ENCODE measurements at regions of chr3 and their contacts with region 1.

Region 1: GRCh38 chr3:141487521-141488252 is 860 bp downstream of the RASA2 start:
- DNase-seq: peak; percentile 94
- H3K4me3 Mint-ChIP-seq: peak overlapping the region; percentile 90
- H3K27ac Mint-ChIP-seq: peak overlapping the region; percentile 98
- H3K4me1 Mint-ChIP-seq: peaks cover 77% of the 10 kb centered on the region
- H3K27me3 Mint-ChIP-seq: no peaks in the 10 kb centered on the region

Region 2: GRCh38 chr3:141255846-141256261 is 231.8 kb before region 1 on chr3:
- CTCF ChIA-PET with region 1: no interaction called
- DNase-seq: peak; percentile 63
- H3K4me3 Mint-ChIP-seq: no peak overlapping the region
- H3K27ac Mint-ChIP-seq: no peak overlapping the region
- H3K4me1 Mint-ChIP-seq: peaks cover 19% of the 10 kb centered on the region
- H3K27me3 Mint-ChIP-seq: no peaks in the 10 kb centered on the region

Region 3: DNA sequence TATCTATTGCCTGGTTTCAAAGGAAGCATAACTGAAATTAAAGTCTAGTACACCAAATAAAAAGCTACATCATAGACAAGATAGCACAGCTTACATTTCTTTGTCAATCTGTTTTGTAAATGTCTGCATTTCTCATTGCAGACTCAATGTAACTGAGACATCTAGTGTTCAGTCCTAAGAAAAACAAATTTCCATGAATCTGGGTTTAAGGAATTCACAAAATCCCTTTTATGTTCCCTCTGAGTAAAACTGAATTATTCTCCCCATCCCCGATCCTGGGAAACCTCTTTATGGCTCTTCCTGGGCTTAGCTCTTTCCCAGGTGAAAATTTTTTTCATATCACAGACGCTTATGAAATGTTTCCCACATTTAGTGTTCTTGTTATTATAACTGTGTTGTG is 22.5 kb before region 1 on chr3:
- CTCF ChIA-PET with region 1: no interaction called
- DNase-seq: no peak
- H3K4me3 Mint-ChIP-seq: no peak overlapping the region
- H3K27ac Mint-ChIP-seq: no peak overlapping the region
- H3K4me1 Mint-ChIP-seq: peaks cover 4% of the 10 kb centered on the region
- H3K27me3 Mint-ChIP-seq: peaks cover 4% of the 10 kb centered on the region

Region 4: GRCh38 chr3:141498598-141499223 is 11.0 kb after region 1 on chr3:
- CTCF ChIA-PET with region 1: interaction called, 14 read pairs
- DNase-seq: peak; percentile 93
- H3K4me3 Mint-ChIP-seq: peak overlapping the region; percentile 66
- H3K27ac Mint-ChIP-seq: peak overlapping the region; percentile 94
- H3K4me1 Mint-ChIP-seq: peaks cover 77% of the 10 kb centered on the region
- H3K27me3 Mint-ChIP-seq: no peaks in the 10 kb centered on the region

Measured in activated naive CD4-positive, alpha-beta T cell treated with anti-CD3 and anti-CD28 coated beads, Interleukin-2, amount 10 ng/mL, durations not matched to agents 7 days and 5 days (primary cell).